Caco-2 (cell line): ENCODE measurements at regions of chr7 and their contacts with region 1.

Region 1: DNA sequence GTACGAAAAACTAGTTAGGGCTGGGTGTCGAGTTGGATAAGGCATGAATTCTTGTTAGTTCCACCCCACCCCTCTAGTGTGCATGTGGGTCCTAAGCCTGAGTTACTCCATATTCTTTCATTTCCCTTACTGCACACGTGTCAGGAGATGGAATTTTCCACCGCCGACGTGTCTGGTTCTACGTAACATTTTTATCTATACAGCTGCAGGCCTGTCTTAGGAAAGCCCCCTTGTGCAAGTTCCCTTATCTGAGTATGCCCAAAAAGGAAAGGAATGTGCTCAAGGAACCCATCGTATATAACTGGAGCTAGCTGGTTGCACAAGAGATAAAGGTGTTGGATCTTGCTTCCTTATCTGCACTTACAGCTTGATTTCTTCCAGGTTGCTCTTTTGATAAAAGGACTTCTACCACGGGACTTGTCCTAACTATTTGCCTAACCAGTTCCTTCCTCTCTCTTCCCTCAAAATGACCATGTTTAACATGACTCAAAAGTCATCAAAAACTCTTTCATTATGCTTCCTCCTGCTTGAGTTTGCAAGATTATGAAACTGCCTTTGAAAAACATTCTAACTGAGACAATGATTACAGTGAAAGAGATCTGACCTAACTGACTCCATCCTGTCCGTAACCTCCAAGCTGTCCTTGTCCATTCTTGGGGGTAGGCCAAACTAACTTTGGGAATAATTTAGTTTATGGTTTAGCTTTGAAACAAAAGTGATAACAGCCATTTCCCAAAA is 181.4 kb downstream of the AKR1D1 start:
- DNase-seq: peak; percentile 79 to 90
- H3K4me3 ChIP-seq: no peak overlapping the region
- H3K4me3 Mint-ChIP-seq: peak overlapping the region; percentile 4
- H3K27ac Mint-ChIP-seq: peak overlapping the region; percentile 94
- H3K4me1 ChIP-seq: peaks cover 28% of the 10 kb centered on the region
- H3K4me1 Mint-ChIP-seq: peaks cover 10% of the 10 kb centered on the region
- H3K27me3 ChIP-seq: no peaks in the 10 kb centered on the region
- H3K27me3 Mint-ChIP-seq: no peaks in the 10 kb centered on the region
- CTCF ChIP-seq: no peak

Region 2: DNA sequence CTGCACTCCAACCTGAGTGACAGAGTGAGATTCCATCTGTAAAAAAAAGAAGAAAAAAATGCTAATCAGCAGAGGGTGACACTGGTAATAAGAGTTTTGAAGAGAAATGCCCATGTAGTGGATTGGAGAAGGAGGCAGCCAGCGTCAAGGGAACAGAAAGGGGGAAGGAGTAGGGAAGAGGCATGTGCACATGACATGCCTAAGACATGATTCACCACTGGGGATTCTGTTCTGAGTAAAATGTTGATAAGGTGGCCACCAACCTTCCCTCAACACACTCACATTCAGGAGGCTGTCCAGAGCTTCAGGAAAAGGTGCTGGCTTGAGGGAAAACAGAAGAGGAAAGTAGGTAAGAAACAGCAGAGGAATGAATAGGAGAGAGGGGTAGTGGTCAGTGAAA is 141.5 kb before region 1 on chr7:
- CTCF ChIA-PET with region 1: no interaction called
- POLR2A ChIA-PET with region 1: no interaction called
- intact Hi-C with region 1: no loop called
- DNase-seq: peak; percentile 30 to 54
- H3K4me3 ChIP-seq: no peak overlapping the region
- H3K4me3 Mint-ChIP-seq: peak overlapping the region; percentile 0
- H3K27ac Mint-ChIP-seq: peak overlapping the region; percentile 22
- H3K4me1 ChIP-seq: peaks cover 17% of the 10 kb centered on the region
- H3K4me1 Mint-ChIP-seq: peaks cover 10% of the 10 kb centered on the region
- H3K27me3 ChIP-seq: no peaks in the 10 kb centered on the region
- H3K27me3 Mint-ChIP-seq: no peaks in the 10 kb centered on the region
- CTCF ChIP-seq: no peak

Region 3: GRCh38 chr7:138126928-138127327 is 130.7 kb before region 1 on chr7:
- CTCF ChIA-PET with region 1: no interaction called
- POLR2A ChIA-PET with region 1: no interaction called
- intact Hi-C with region 1: loop called (anchors 1 kb)
- DNase-seq: peak; percentile 76 to 87
- H3K4me3 ChIP-seq: no peak overlapping the region
- H3K4me3 Mint-ChIP-seq: peak overlapping the region; percentile 46
- H3K27ac Mint-ChIP-seq: peak overlapping the region; percentile 92
- H3K4me1 ChIP-seq: peaks cover 26% of the 10 kb centered on the region
- H3K4me1 Mint-ChIP-seq: peaks cover 12% of the 10 kb centered on the region
- H3K27me3 ChIP-seq: no peaks in the 10 kb centered on the region
- H3K27me3 Mint-ChIP-seq: no peaks in the 10 kb centered on the region
- CTCF ChIP-seq: no peak

Region 4: DNA sequence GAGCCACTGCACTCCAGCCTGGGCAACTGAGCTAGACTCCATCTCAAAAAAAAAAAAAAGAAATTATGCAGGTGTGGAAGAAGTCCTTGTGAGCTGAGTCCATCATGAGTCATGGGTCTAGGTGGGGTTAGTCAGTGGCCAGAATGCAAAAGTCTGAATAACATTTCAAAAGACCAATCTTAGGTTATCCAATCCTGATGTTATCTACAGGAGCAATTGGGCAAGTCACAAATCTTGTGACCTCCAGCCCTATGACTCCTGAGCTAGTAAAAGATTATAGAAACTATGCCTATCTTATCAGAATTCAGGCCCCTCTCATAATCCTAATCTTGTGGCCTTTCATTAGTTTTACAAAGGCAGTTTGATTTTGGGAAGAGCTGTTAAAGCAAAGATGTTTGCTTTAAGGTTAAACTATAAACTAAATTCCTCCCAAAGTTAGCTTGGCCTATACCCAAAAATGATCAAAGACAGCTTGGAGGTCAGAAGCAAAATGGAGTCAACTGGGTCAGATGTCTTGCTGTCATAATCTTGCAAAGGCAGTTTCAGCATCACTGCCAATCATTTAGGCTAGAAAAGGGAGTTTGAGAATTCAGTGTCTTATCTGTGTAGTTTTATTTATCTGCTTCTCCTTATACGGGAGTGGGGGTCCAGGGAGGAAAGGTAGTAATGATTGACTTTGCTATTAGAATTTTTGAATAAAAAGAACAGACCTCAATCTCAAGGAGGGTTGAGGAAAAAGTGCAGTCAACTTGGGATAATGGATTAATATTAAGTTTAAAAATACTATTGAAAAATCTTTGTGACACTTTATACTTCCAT is 131.3 kb after region 1 on chr7:
- CTCF ChIA-PET with region 1: no interaction called
- POLR2A ChIA-PET with region 1: no interaction called
- intact Hi-C with region 1: loop called (anchors 2 kb)
- DNase-seq: peak; percentile 51 to 60
- H3K4me3 ChIP-seq: no peak overlapping the region
- H3K4me3 Mint-ChIP-seq: no peak overlapping the region
- H3K27ac Mint-ChIP-seq: peak overlapping the region; percentile 72
- H3K4me1 ChIP-seq: peaks cover 9% of the 10 kb centered on the region; the same call in 1 of the 2 replicates
- H3K4me1 Mint-ChIP-seq: no peaks in the 10 kb centered on the region
- H3K27me3 ChIP-seq: no peaks in the 10 kb centered on the region
- H3K27me3 Mint-ChIP-seq: no peaks in the 10 kb centered on the region
- CTCF ChIP-seq: no peak